Natural killer cell (primary cell): ENCODE measurements at regions of chr10 and their contacts with region 1.

Region 1: DNA sequence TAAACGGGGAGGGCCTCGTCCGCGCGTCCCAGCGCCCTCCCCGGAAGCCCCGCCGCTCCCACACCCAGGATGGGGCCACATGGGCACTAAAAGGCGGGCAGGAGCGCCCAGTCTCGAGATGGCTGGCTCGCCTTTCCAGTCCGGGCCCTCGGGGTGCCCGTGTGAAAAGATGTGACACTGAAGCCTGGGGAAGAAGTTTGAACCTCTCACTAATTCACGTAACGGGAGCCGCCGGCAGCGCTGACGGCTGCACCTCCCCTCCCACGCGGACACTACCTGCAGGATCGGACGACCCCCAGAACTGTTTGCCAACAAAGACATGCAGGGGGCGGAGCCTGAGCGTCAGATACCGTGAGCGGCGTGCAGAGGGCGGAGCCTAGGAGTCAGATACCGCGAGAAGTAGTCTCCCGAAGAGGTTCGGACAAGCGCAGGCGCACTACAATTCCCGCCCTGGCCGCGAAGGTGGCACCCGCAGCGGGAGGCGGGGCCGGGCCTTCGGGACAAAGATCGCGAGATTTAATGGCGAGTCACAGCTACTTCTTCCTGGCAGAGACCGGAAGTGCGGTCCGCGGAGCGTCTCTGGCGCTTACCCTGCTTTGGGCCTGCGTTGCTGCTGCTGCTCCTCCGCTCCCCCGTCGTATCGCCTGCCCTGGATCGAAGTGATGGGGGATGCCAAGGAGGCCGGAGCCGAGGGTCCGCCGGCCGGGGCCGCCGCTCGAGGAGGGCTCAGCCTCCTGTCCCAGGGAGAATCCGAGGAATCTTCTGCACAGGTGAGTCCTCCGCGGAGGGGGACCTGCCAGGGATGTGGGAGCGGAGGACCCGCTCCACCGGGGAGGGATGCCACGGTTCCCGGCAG is at the start of gene EDRF1:
- DNase-seq: peak; percentile 99 to 100
- ATAC-seq: peak; percentile 91 to 98 (median 92)
- H3K4me3 ChIP-seq: peak within 1 kb of the TSS; percentile 84
- H3K4me3 Mint-ChIP-seq: peak within 1 kb of the TSS; percentile 97
- H3K27ac ChIP-seq: peak within 1 kb of the TSS; percentile 89
- H3K27ac Mint-ChIP-seq: peak within 1 kb of the TSS; percentile 92 to 96
- H3K4me1 ChIP-seq: peaks cover 23% of the 10 kb centered on the region
- H3K4me1 Mint-ChIP-seq: peaks cover 12 to 30% of the 10 kb centered on the region in 2 donors
- H3K27me3 ChIP-seq: no peaks in the 10 kb centered on the region
- H3K27me3 Mint-ChIP-seq: no peaks in the 10 kb centered on the region
- CTCF ChIP-seq: no peak
- total RNA-seq, gene EDRF1: 40.6 to 66.2 (median 57.5) TPM

Region 2: GRCh38 chr10:124916585-124917427 is 802.6 kb before region 1 on chr10:
- intact Hi-C with region 1: loop called (anchors 2 kb)
- DNase-seq: peak; percentile 98
- ATAC-seq: peak; percentile 89 to 95 (median 92)
- H3K4me3 ChIP-seq: peak overlapping the region; percentile 68
- H3K4me3 Mint-ChIP-seq: peak overlapping the region; percentile 96
- H3K27ac ChIP-seq: peak overlapping the region; percentile 93
- H3K27ac Mint-ChIP-seq: peak overlapping the region; percentile 95
- H3K4me1 ChIP-seq: peaks cover 16% of the 10 kb centered on the region
- H3K4me1 Mint-ChIP-seq: peaks cover 36 to 40% of the 10 kb centered on the region in 2 donors
- H3K27me3 ChIP-seq: no peaks in the 10 kb centered on the region
- H3K27me3 Mint-ChIP-seq: peaks cover 8 to 12% of the 10 kb centered on the region in 2 donors
- CTCF ChIP-seq: no peak

Region 3: DNA sequence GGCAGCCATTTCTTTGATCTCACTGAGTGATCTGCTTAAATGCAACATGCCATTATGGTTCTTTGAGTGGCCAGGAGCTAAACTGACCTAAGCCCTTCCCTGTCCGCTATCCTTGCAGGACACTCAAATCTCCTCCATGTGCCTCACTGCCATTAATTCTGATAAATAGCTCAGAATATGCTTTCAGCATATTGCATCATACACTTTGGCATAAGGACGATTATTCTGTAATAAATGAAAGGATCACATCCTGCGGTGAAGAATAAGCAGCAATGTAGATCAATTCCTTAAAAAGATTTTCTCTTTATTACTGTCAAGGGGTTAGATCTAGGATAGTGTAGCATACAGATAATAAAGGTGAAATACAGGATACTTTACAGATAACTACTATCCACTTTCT is 327.2 kb before region 1 on chr10:
- intact Hi-C with region 1: no loop called
- DNase-seq: no peak
- ATAC-seq: no peak
- H3K4me3 ChIP-seq: no peak overlapping the region
- H3K4me3 Mint-ChIP-seq: no peak overlapping the region
- H3K27ac ChIP-seq: no peak overlapping the region
- H3K27ac Mint-ChIP-seq: no peak overlapping the region
- H3K4me1 ChIP-seq: no peaks in the 10 kb centered on the region
- H3K4me1 Mint-ChIP-seq: no peaks in the 10 kb centered on the region
- H3K27me3 ChIP-seq: peaks cover 3% of the 10 kb centered on the region
- H3K27me3 Mint-ChIP-seq: peaks cover 23 to 48% of the 10 kb centered on the region in 2 donors
- CTCF ChIP-seq: no peak

Region 4: DNA sequence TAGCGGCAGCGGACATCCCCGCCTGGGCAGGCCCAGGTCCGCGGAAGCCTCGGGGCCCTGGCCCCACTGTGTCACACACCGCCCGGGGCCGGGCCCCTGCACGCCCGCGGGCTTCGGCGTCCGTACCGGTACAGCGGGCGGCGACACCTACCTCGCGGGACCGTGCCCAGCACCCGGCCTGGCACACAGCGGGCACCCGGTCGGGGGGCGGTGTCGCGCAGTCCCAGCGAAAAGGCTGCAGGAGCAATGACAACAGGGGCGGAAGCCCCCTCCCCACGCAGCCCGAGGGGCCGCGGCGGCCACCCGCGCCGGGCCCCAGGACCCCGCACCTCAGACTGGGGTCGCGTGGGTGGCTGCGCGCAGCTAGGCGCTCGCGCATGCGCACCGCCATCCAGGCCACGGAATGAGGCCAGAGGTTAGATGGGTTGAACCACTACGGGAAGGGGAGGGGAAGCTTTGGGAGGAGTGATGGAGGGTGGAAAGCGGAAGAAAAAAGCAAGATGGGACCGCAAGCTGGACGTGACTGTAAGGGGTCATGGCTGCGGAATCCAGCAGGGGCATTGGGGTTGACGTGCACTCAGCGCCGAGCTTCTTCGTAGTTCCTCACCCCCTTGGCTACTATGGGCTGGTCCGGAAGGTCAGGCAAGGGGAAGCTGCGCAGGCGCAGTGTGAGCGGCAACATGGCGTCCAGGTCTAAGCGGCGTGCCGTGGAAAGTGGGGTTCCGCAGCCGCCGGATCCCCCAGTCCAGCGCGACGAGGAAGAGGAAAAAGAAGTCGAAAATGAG is 103.7 kb after region 1 on chr10 and contains the starts of genes BCCIP and UROS:
- intact Hi-C with region 1: loop called (anchors 1 kb)
- DNase-seq: peak; percentile 91 to 98
- ATAC-seq: peak; percentile 85 to 93 (median 87)
- H3K4me3 ChIP-seq: peak within 1 kb of the TSS; percentile 92
- H3K4me3 Mint-ChIP-seq: peak within 1 kb of the TSS; percentile 76
- H3K27ac ChIP-seq: peak within 1 kb of the TSS; percentile 95
- H3K27ac Mint-ChIP-seq: no peak within 1 kb of the TSS
- H3K4me1 ChIP-seq: peaks cover 29% of the 10 kb centered on the region
- H3K4me1 Mint-ChIP-seq: peaks cover 11 to 29% of the 10 kb centered on the region in 2 donors
- H3K27me3 ChIP-seq: no peaks in the 10 kb centered on the region
- H3K27me3 Mint-ChIP-seq: no peaks in the 10 kb centered on the region
- CTCF ChIP-seq: no peak
- total RNA-seq, gene BCCIP: 39.3 to 48.2 (median 41.3) TPM
- total RNA-seq, gene UROS: 29.1 to 42.5 (median 35.2) TPM